ENCODE measurements at regions of chr16 and their contacts with region 1.

Region 1: DNA sequence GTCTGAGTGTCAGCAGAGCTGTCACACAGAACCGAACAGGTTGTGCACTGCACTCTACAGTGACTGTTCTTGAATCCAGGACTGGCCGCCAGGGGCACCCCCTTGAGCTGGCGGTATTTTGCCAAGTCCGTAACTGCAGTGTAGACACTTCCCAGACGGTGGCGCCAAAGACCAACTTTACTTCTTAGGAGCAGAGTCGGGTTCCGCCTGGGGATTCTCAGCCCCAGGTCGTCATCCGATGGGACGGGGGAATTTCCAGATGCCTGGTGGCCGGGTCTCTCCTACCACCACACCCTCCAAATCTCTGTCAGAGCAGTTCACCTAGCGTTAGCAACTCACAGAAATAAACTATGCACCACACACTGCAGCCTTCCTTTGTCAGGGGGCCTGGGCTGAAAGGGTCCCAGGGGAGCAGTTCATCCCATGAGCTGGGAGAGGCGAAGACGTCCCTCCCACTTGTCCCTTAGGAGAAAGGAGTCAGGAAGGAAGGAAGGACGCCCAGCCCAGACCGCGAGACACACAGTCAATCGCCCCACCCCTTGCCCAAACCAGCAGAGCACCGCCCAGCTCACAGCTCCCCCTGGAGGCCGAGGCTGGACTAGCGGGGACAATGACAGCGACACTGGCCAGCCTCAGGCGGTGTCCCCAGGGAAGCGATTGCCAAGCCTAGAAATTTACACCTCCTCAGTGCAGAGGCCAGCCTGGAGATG is 7.4 kb upstream of the RIPOR1 start:
- DNase-seq: peak; percentile 98
- ATAC-seq: peak; percentile 92
- H3K4me3 Mint-ChIP-seq: peak overlapping the region; percentile 84
- H3K27ac Mint-ChIP-seq: peak overlapping the region; percentile 94
- H3K4me1 Mint-ChIP-seq: peaks cover 47% of the 10 kb centered on the region
- H3K27me3 Mint-ChIP-seq: peaks cover 8% of the 10 kb centered on the region

Region 2: DNA sequence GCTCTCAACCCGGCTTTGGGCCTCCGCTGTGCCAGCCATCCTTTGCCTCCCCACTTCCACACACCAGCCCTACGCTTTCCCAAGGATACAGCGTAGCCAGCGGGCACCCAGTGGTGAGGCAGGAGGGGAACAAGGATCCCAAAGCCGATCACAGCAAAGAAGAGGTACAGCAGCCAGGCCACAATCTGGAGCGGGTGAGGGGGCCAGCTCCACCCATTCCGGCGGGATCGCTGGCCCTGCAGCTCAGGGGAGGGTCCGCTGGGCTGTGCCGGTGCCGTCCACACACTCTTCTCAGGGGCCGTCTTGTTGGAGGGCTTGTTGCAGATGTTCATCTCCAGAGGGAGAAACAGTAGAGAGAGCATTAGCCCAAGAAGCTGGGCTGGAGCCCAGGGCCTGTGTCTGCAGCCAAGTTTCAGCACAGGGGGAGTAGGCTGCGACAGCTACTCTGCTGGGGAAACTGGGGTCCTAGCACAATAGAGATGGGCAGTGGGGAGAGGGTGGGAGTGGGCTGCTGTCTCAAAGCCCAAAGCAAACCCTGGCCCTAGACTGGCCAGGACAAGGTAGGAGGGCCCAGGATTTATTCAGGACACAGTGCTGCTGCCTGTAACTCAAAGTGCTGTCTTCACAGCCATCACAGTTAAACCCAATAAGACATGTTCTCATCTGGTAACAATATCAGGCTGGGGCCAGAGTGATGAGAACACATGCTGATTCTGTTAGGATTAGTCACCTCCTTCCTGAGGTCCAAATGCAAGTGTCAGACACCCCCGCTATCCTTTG is 114.9 kb before region 1 on chr16:
- CTCF ChIA-PET with region 1: no interaction called
- POLR2A ChIA-PET with region 1: no interaction called
- DNase-seq: no peak
- ATAC-seq: no peak
- H3K4me3 Mint-ChIP-seq: no peak overlapping the region
- H3K27ac Mint-ChIP-seq: no peak overlapping the region
- H3K4me1 Mint-ChIP-seq: no peaks in the 10 kb centered on the region
- H3K27me3 Mint-ChIP-seq: peaks cover 9% of the 10 kb centered on the region

Region 3: GRCh38 chr16:67490335-67491096 is 30.7 kb before region 1 on chr16:
- CTCF ChIA-PET with region 1: interaction called, 277 read pairs
- POLR2A ChIA-PET with region 1: interaction called, 6 read pairs
- DNase-seq: no peak
- ATAC-seq: no peak
- H3K4me3 Mint-ChIP-seq: no peak overlapping the region
- H3K27ac Mint-ChIP-seq: no peak overlapping the region
- H3K4me1 Mint-ChIP-seq: peaks cover 9% of the 10 kb centered on the region
- H3K27me3 Mint-ChIP-seq: no peaks in the 10 kb centered on the region

Region 4: GRCh38 chr16:67537270-67537635 is 16.0 kb after region 1 on chr16:
- CTCF ChIA-PET with region 1: interaction called, 80 read pairs
- POLR2A ChIA-PET with region 1: interaction called, 3 read pairs
- DNase-seq: peak; percentile 46
- ATAC-seq: peak; percentile 47
- H3K4me3 Mint-ChIP-seq: peak overlapping the region; percentile 69
- H3K27ac Mint-ChIP-seq: peak overlapping the region; percentile 25
- H3K4me1 Mint-ChIP-seq: peaks cover 10% of the 10 kb centered on the region
- H3K27me3 Mint-ChIP-seq: peaks cover 34% of the 10 kb centered on the region

Region 5: GRCh38 chr16:67561824-67562525 is 40.7 kb after region 1 on chr16:
- CTCF ChIA-PET with region 1: interaction called, 79 read pairs
- POLR2A ChIA-PET with region 1: interaction called, 3 read pairs
- DNase-seq: peak; percentile 99
- ATAC-seq: peak; percentile 92
- H3K4me3 Mint-ChIP-seq: peak overlapping the region; percentile 88
- H3K27ac Mint-ChIP-seq: peak overlapping the region; percentile 95
- H3K4me1 Mint-ChIP-seq: peaks cover 43% of the 10 kb centered on the region
- H3K27me3 Mint-ChIP-seq: no peaks in the 10 kb centered on the region

Region 6: DNA sequence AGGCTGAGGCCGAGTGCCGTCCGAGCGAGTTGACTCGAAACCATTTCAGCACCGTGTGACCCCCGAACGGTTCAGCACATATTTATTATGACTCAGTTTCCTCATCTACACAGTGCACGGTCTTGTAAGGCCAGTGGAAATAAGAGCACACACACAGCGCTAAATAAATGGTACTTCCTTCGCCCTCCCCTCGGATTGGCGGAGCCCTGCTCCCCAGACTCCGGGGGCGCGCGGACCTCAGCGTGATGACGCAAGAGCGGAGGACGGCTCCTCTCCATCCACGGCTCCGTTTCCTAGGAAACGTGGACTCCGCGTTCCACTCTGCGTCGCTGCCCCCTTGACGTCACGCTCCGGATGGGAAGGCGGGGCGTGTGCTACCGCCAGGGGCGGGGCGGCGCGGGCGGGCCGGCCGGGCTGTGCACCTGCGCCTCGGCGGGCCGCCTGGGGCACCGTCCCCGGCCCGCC is 139.3 kb after region 1 on chr16 and contains the start of gene PARD6A:
- CTCF ChIA-PET with region 1: interaction called, 211 read pairs
- POLR2A ChIA-PET with region 1: interaction called, 5 read pairs
- DNase-seq: peak; percentile 98
- ATAC-seq: peak; percentile 78
- H3K4me3 Mint-ChIP-seq: peak within 1 kb of the TSS; percentile 89
- H3K27ac Mint-ChIP-seq: peak within 1 kb of the TSS; percentile 96
- H3K4me1 Mint-ChIP-seq: peaks cover 31% of the 10 kb centered on the region
- H3K27me3 Mint-ChIP-seq: no peaks in the 10 kb centered on the region
- total RNA-seq, gene PARD6A: 13.2 to 14.7 TPM

Region 7: GRCh38 chr16:67719048-67719777 is 198.0 kb after region 1 on chr16 and contains the start of gene GFOD2:
- CTCF ChIA-PET with region 1: interaction called, 13 read pairs
- POLR2A ChIA-PET with region 1: no interaction called
- DNase-seq: peak; percentile 98
- ATAC-seq: peak; percentile 92
- H3K4me3 Mint-ChIP-seq: peak within 1 kb of the TSS; percentile 99
- H3K27ac Mint-ChIP-seq: peak within 1 kb of the TSS; percentile 99
- H3K4me1 Mint-ChIP-seq: peaks cover 31% of the 10 kb centered on the region
- H3K27me3 Mint-ChIP-seq: no peaks in the 10 kb centered on the region
- total RNA-seq, gene GFOD2: 12.5 to 14.0 TPM

Measured in activated CD8-positive, alpha-beta T cell treated with anti-CD3 and anti-CD28 coated beads, Interleukin-2, amount 10 ng/mL, durations not matched to agents 7 days and 5 days (primary cell).